ENCODE measurements at regions of chr13 and their contacts with region 1.

Region 1: DNA sequence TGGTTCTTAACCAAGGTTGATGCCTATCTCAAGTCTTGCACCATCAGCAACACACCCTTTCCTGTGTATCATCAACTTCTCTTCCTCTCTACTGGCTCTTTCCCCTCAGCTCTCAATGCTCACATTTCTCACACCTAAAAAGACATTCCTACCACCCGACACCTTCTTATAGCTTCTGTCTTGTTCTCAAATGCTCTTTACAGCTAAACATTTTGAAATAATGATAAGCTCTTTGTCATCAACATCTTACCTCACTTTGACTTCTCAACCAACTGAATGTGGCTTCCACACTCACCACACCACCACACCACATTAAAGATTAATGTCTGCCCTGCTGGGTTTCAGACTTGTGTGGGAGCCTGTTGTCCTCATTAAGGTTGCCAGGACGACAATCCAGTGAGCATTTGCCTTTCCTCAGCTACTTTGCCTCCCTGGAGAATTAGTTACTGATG is 67.8 kb downstream of the RXFP2 start:
- DNase-seq: peak; percentile 64 to 71
- ATAC-seq: peak; percentile 89 to 95 (median 90)
- H3K4me3 ChIP-seq: no peak overlapping the region
- H3K4me3 Mint-ChIP-seq: peak overlapping the region; percentile 61
- H3K27ac ChIP-seq: peak overlapping the region; percentile 86
- H3K27ac Mint-ChIP-seq: peak overlapping the region; percentile 78 to 87
- H3K4me1 ChIP-seq: peaks cover 32% of the 10 kb centered on the region
- H3K4me1 Mint-ChIP-seq: peaks cover 47 to 48% of the 10 kb centered on the region in 2 donors
- H3K27me3 ChIP-seq: peaks cover 6% of the 10 kb centered on the region
- H3K27me3 Mint-ChIP-seq: peaks cover 9 to 12% of the 10 kb centered on the region in 2 donors
- CTCF ChIP-seq: no peak

Region 2: GRCh38 chr13:30224732-30225131 is 1582.4 kb before region 1 on chr13:
- intact Hi-C with region 1: no loop called
- DNase-seq: no peak
- ATAC-seq: no peak
- H3K4me3 ChIP-seq: no peak overlapping the region
- H3K4me3 Mint-ChIP-seq: no peak overlapping the region
- H3K27ac ChIP-seq: no peak overlapping the region
- H3K27ac Mint-ChIP-seq: peak overlapping the region in 1 of 2 donors; percentile 11
- H3K4me1 ChIP-seq: no peaks in the 10 kb centered on the region
- H3K4me1 Mint-ChIP-seq: peaks cover 5 to 6% of the 10 kb centered on the region in 2 donors
- H3K27me3 ChIP-seq: no peaks in the 10 kb centered on the region
- H3K27me3 Mint-ChIP-seq: no peaks in the 10 kb centered on the region
- CTCF ChIP-seq: no peak

Region 3: DNA sequence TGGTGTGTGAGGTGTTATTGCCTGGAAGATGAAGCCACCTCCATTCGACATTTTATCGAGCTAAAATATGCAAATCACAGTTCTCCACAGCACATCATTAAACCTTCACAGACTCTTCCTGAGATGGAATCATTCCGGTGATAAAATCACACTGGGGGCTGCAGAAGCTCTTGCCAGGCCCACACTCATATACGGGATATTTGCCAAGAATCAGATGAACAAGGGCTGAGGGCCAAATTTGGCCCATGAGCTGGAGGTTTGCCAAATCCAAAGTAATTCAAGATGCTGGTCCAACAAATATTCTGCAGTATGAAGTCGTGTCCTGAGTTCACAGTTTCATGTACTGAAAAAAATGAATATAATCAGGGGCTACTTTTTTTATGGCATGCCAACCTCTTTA is 84.4 kb before region 1 on chr13:
- intact Hi-C with region 1: no loop called
- DNase-seq: no peak
- ATAC-seq: no peak
- H3K4me3 ChIP-seq: no peak overlapping the region
- H3K4me3 Mint-ChIP-seq: no peak overlapping the region
- H3K27ac ChIP-seq: no peak overlapping the region
- H3K27ac Mint-ChIP-seq: no peak overlapping the region
- H3K4me1 ChIP-seq: no peaks in the 10 kb centered on the region
- H3K4me1 Mint-ChIP-seq: no peaks in the 10 kb centered on the region
- H3K27me3 ChIP-seq: no peaks in the 10 kb centered on the region
- H3K27me3 Mint-ChIP-seq: peaks cover 19 to 25% of the 10 kb centered on the region in 2 donors
- CTCF ChIP-seq: no peak

Region 4: DNA sequence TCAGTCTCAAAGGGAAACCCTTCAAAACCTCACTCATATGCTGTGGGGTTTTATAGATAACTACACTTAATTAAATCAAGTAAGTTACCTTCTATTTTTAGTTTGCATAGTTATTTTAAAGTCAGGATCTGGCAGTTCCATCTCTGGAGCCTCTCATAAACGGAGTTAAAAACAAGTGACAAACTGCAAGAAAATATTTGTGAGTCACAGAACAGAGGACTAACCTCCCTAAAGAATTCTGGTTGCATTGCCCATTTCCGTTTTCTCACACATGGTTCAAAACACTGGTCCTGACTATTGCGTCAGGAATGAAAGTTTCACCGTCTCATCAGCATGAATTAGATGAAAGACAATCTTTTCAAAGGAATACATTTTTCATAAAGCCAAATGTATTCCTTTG is 57.2 kb before region 1 on chr13:
- intact Hi-C with region 1: no loop called
- DNase-seq: no peak
- ATAC-seq: no peak
- H3K4me3 ChIP-seq: no peak overlapping the region
- H3K4me3 Mint-ChIP-seq: no peak overlapping the region
- H3K27ac ChIP-seq: no peak overlapping the region
- H3K27ac Mint-ChIP-seq: no peak overlapping the region
- H3K4me1 ChIP-seq: no peaks in the 10 kb centered on the region
- H3K4me1 Mint-ChIP-seq: peaks cover 0 to 2% of the 10 kb centered on the region in 2 donors
- H3K27me3 ChIP-seq: peaks cover 3% of the 10 kb centered on the region
- H3K27me3 Mint-ChIP-seq: peaks cover 18 to 22% of the 10 kb centered on the region in 2 donors
- CTCF ChIP-seq: no peak

Region 5: GRCh38 chr13:31846182-31846950 is 39.2 kb after region 1 on chr13:
- intact Hi-C with region 1: loop called (anchors 2 kb)
- DNase-seq: peak; percentile 73 to 82
- ATAC-seq: peak; percentile 96 to 98 (median 97)
- H3K4me3 ChIP-seq: peak overlapping the region; percentile 57
- H3K4me3 Mint-ChIP-seq: peak overlapping the region; percentile 94
- H3K27ac ChIP-seq: peak overlapping the region; percentile 53
- H3K27ac Mint-ChIP-seq: peak overlapping the region; percentile 72 to 89
- H3K4me1 ChIP-seq: peaks cover 6% of the 10 kb centered on the region
- H3K4me1 Mint-ChIP-seq: peaks cover 14 to 36% of the 10 kb centered on the region in 2 donors
- H3K27me3 ChIP-seq: no peaks in the 10 kb centered on the region
- H3K27me3 Mint-ChIP-seq: peaks cover 0 to 19% of the 10 kb centered on the region in 2 donors
- CTCF ChIP-seq: no peak

Region 6: DNA sequence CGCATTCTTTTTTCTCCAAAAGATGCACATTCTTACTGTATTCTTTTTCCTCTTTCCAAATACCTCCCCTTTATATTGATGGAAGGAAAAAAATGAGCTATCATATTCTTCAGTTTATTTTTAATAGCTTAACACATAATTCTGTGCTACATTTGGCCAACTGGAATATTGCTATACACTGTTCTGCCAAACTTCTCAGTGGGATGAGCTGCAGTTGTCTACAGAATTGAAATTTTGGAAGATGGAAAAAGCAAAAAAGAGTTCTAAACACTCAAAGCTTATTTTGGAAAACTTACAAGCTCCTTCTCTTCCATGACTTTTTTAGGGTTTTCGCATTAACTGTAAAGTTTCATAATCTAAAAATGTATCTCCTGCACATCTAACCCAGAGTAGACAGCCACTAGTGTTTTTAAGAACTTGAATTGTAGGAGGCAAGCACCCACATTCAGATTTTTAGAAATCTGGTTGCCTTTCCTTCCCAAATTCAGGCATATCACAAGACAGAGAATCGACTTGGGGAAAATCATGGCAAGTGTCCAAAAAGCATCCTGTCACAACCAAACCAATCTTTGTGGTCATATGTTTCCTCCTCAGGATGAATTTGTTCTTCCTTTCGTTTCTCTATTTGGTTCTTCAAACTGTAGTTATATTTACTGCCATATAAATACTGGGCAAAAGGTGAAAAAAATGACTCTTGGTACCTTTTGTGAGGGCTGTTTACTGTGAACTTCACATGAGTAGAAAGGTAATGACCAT is 113.0 kb after region 1 on chr13:
- intact Hi-C with region 1: loop called (anchors 10 kb)
- DNase-seq: no peak
- ATAC-seq: no peak
- H3K4me3 ChIP-seq: no peak overlapping the region
- H3K4me3 Mint-ChIP-seq: no peak overlapping the region
- H3K27ac ChIP-seq: no peak overlapping the region
- H3K27ac Mint-ChIP-seq: peak overlapping the region; percentile 29 to 60
- H3K4me1 ChIP-seq: no peaks in the 10 kb centered on the region
- H3K4me1 Mint-ChIP-seq: peaks cover 19 to 30% of the 10 kb centered on the region in 2 donors
- H3K27me3 ChIP-seq: no peaks in the 10 kb centered on the region
- H3K27me3 Mint-ChIP-seq: no peaks in the 10 kb centered on the region
- CTCF ChIP-seq: no peak

Measured in natural killer cell (primary cell).